Panc1 (cell line): ENCODE measurements at regions of chr12 and their contacts with region 1.

Region 1: GRCh38 chr12:76952995-76953394 is 74.2 kb upstream of the CSRP2 start:
- DNase-seq: no peak
- ATAC-seq: no peak
- H3K4me3 ChIP-seq: no peak overlapping the region
- H3K27ac ChIP-seq: no peak overlapping the region
- H3K4me1 ChIP-seq: no peaks in the 10 kb centered on the region
- H3K27me3 ChIP-seq: peaks cover 5% of the 10 kb centered on the region; the same call in 1 of the 2 replicates
- CTCF ChIP-seq: peak; percentile 24; the same call in 1 of the 2 replicates

Region 2: GRCh38 chr12:76555231-76555767 is 397.7 kb before region 1 on chr12:
- CTCF ChIA-PET with region 1: no interaction called
- POLR2A ChIA-PET with region 1: interaction called, 18 read pairs
- in situ Hi-C with region 1: no loop called
- intact Hi-C with region 1: no loop called
- DNase-seq: no peak
- ATAC-seq: no peak
- H3K4me3 ChIP-seq: no peak overlapping the region
- H3K27ac ChIP-seq: no peak overlapping the region
- H3K4me1 ChIP-seq: peaks cover 16% of the 10 kb centered on the region; the same call in 1 of the 2 replicates
- H3K27me3 ChIP-seq: no peaks in the 10 kb centered on the region
- CTCF ChIP-seq: peak; percentile 5; the same call in 1 of the 2 replicates

Region 3: GRCh38 chr12:76608075-76608474 is 344.9 kb before region 1 on chr12:
- CTCF ChIA-PET with region 1: no interaction called
- POLR2A ChIA-PET with region 1: interaction called, 12 read pairs
- in situ Hi-C with region 1: no loop called
- intact Hi-C with region 1: no loop called
- DNase-seq: no peak
- ATAC-seq: no peak
- H3K4me3 ChIP-seq: no peak overlapping the region
- H3K27ac ChIP-seq: no peak overlapping the region
- H3K4me1 ChIP-seq: no peaks in the 10 kb centered on the region
- H3K27me3 ChIP-seq: no peaks in the 10 kb centered on the region; the same call in 1 of the 2 replicates
- CTCF ChIP-seq: no peak

Region 4: GRCh38 chr12:77152623-77153193 is 199.7 kb after region 1 on chr12:
- CTCF ChIA-PET with region 1: no interaction called
- POLR2A ChIA-PET with region 1: no interaction called
- in situ Hi-C with region 1: no loop called
- intact Hi-C with region 1: no loop called
- DNase-seq: peak; percentile 18
- ATAC-seq: no peak
- H3K4me3 ChIP-seq: no peak overlapping the region
- H3K27ac ChIP-seq: no peak overlapping the region
- H3K4me1 ChIP-seq: no peaks in the 10 kb centered on the region
- H3K27me3 ChIP-seq: no peaks in the 10 kb centered on the region
- CTCF ChIP-seq: peak; percentile 60

Region 5: DNA sequence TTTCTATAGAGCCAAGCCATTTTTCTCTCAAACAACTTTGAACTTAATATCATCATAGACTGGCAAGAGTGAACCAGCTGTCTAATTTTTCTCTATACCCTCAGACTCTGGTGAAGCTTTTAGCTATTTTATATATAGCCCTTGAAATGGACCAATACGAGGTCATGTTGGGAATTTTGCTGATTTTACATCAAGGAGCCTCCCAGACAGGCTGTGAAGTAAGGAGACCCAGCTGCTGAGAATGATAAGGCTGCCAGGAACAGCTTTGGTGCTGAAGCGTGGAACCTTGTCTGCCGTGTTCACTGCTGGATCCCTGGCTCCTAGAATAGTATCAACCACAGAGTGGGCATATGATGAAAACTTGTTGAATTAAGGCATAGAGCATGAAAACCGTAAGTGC is 551.5 kb after region 1 on chr12:
- CTCF ChIA-PET with region 1: no interaction called
- POLR2A ChIA-PET with region 1: no interaction called
- in situ Hi-C with region 1: no loop called
- intact Hi-C with region 1: no loop called
- DNase-seq: no peak
- ATAC-seq: no peak
- H3K4me3 ChIP-seq: no peak overlapping the region
- H3K27ac ChIP-seq: no peak overlapping the region
- H3K4me1 ChIP-seq: no peaks in the 10 kb centered on the region
- H3K27me3 ChIP-seq: no peaks in the 10 kb centered on the region
- CTCF ChIP-seq: no peak

Region 6: GRCh38 chr12:78455991-78456390 is 1503.0 kb after region 1 on chr12:
- CTCF ChIA-PET with region 1: no interaction called
- POLR2A ChIA-PET with region 1: no interaction called
- in situ Hi-C with region 1: no loop called
- intact Hi-C with region 1: no loop called
- DNase-seq: no peak
- ATAC-seq: no peak
- H3K4me3 ChIP-seq: no peak overlapping the region
- H3K27ac ChIP-seq: no peak overlapping the region
- H3K4me1 ChIP-seq: no peaks in the 10 kb centered on the region
- H3K27me3 ChIP-seq: no peaks in the 10 kb centered on the region
- CTCF ChIP-seq: no peak